ENCODE measurements at regions of chr7 and their contacts with region 1.

Region 1: GRCh38 chr7:121994625-121995410 is 121.9 kb downstream of the PTPRZ1 start:
- DNase-seq: peak; percentile 11 to 86 (median 70)

Region 2: GRCh38 chr7:121676168-121676567 is 318.6 kb before region 1 on chr7:
- intact Hi-C with region 1: no loop called
- DNase-seq: no peak

Region 3: GRCh38 chr7:121752706-121753105 is 242.1 kb before region 1 on chr7:
- intact Hi-C with region 1: loop called (anchors 5 kb)
- DNase-seq: peak in 9 of 42 donors; percentile 6 to 45 (median 18)

Measured in head of caudate nucleus (tissue), 42 donors.